Ascending aorta (tissue), 2 donors: ENCODE measurements at regions of chr12 and their contacts with region 1.

Region 1: GRCh38 chr12:115752913-115753726 is 524.4 kb downstream of the MED13L start:
- DNase-seq: no peak
- H3K4me3 ChIP-seq: no peak overlapping the region
- H3K27ac ChIP-seq: no peak overlapping the region
- H3K4me1 ChIP-seq: no peaks in the 10 kb centered on the region
- H3K27me3 ChIP-seq: no peaks in the 10 kb centered on the region
- CTCF ChIP-seq: peak; percentile 51 to 79 (median 54)

Region 2: DNA sequence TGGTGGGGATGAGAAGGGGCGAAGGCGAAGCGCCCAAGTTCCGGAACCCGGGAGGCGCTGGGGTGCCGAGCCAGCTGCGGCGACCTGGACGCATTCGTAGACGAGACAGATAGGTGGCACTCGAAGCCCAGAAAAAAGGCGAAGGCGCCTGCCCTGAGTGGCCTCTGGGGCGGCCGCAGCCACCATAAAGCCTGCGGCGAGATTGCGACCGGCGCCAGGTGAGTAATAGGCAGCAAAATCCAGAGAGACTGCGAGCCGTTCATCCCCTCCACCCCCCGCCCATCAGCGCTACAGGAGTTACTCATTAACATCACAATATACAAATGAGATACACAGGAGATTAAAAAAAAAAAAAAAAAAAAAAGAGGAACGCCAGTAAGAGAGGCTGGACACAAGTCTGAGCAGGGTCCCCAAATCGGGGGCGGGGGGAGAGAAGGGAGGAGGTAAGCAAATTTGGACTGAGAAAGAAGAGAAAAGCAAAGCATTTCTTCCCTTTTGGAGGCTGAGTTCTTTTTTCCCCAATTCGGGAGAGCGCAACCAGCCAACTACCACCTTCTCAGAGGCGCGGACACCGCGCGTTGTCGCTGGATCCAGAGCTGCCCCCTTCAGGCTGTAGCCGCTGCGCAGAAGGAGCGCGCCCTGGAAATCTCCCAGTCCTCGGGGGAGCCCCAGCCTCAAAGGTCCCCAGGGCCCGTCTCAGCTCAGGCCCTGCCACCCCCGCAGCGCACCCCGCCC is 1084.8 kb before region 1 on chr12:
- intact Hi-C with region 1: loop called (anchors 2 kb)
- DNase-seq: peak in 1 of 2 donors; percentile 78
- H3K4me3 ChIP-seq: peak overlapping the region; percentile 32 to 57
- H3K27ac ChIP-seq: no peak overlapping the region
- H3K4me1 ChIP-seq: peaks cover 0 to 6% of the 10 kb centered on the region in 2 donors
- H3K27me3 ChIP-seq: peaks cover 16% of the 10 kb centered on the region
- CTCF ChIP-seq: peak; percentile 34 to 60 (median 54)

Region 3: DNA sequence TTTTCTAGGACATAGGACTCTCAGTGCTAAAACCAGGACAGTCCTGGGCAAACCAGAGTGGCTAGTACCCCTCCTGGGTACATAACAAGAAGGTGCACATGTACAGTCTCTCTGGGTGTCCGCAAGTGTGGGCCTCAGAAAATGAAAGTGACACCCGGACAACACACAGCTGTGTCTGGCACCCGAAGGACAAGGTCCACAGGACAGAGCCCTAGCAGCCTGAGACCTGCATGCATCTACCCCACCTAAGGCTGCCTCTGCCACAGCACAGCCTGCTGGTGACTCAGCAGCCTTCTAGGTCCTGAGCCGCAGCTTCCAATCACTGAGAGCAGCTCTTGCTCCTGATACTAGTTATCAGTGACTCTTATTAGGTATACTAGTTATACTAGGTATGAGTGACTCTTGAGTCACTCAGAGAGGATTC is 285.0 kb before region 1 on chr12:
- intact Hi-C with region 1: no loop called
- DNase-seq: no peak
- H3K4me3 ChIP-seq: no peak overlapping the region
- H3K27ac ChIP-seq: no peak overlapping the region
- H3K4me1 ChIP-seq: no peaks in the 10 kb centered on the region
- H3K27me3 ChIP-seq: no peaks in the 10 kb centered on the region
- CTCF ChIP-seq: no peak

Region 4: GRCh38 chr12:115626210-115626609 is 126.9 kb before region 1 on chr12:
- intact Hi-C with region 1: loop called (anchors 2 kb)
- DNase-seq: no peak
- H3K4me3 ChIP-seq: no peak overlapping the region
- H3K27ac ChIP-seq: no peak overlapping the region
- H3K4me1 ChIP-seq: no peaks in the 10 kb centered on the region
- H3K27me3 ChIP-seq: no peaks in the 10 kb centered on the region
- CTCF ChIP-seq: no peak

Region 5: GRCh38 chr12:115697340-115697739 is 55.8 kb before region 1 on chr12:
- intact Hi-C with region 1: no loop called
- DNase-seq: no peak
- H3K4me3 ChIP-seq: no peak overlapping the region
- H3K27ac ChIP-seq: no peak overlapping the region
- H3K4me1 ChIP-seq: no peaks in the 10 kb centered on the region
- H3K27me3 ChIP-seq: no peaks in the 10 kb centered on the region
- CTCF ChIP-seq: no peak

Region 6: GRCh38 chr12:115774148-115774905 is 21.2 kb after region 1 on chr12:
- intact Hi-C with region 1: no loop called
- DNase-seq: no peak
- H3K4me3 ChIP-seq: no peak overlapping the region
- H3K27ac ChIP-seq: no peak overlapping the region
- H3K4me1 ChIP-seq: no peaks in the 10 kb centered on the region
- H3K27me3 ChIP-seq: no peaks in the 10 kb centered on the region
- CTCF ChIP-seq: no peak